K562 (cell line): ENCODE measurements at regions of chr1 and their contacts with region 1.

Region 1: GRCh38 chr1:112298558-112298957 is 97.5 kb upstream of the CTTNBP2NL start:
- DNase-seq: peak; percentile 70 to 75 (median 73)
- ATAC-seq: peak; percentile 94
- H3K4me3 ChIP-seq: no peak overlapping the region
- H3K27ac ChIP-seq: no peak overlapping the region
- H3K4me1 ChIP-seq: no peaks in the 10 kb centered on the region
- H3K27me3 ChIP-seq: no peaks in the 10 kb centered on the region; a peak in 1 of 5 replicates
- CTCF ChIP-seq: peak; percentile 79 to 98 (median 85)
- EP300 ChIP-seq: no peak
- POLR2A ChIP-seq: no peak
- RAD21 ChIP-seq: peak; percentile 97 to 98

Region 2: DNA sequence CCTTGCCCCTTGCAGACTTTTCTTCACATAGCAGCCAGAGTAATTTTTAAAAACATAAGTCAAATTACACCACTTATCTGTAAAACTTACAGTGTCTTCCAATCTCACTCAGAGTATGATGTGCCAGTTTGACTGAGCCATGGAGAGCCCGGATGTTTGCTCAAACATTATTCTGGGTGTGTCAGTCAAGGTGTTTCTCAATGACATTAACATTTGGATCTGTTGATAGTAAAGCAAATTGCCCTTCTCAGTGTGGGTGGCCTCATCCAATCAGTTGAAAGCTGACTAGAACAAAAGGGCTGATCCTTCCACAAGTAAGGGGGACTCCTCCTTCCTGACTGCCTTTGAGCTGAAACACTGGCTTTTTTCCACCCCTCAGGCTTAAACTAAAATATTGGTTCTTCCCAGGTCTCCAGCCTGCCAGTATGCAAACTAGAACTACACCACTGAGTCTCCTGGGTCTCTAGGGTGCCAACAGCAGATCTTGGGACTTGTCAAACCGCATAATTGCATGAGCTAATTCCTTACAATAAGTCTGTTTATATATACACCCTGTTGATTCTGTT is 60.5 kb before region 1 on chr1:
- CTCF ChIA-PET with region 1: no interaction called
- POLR2A ChIA-PET with region 1: no interaction called
- in situ Hi-C with region 1: no loop called
- intact Hi-C with region 1: no loop called
- DNase-seq: no peak
- ATAC-seq: no peak
- H3K4me3 ChIP-seq: no peak overlapping the region
- H3K27ac ChIP-seq: no peak overlapping the region
- H3K4me1 ChIP-seq: no peaks in the 10 kb centered on the region
- H3K27me3 ChIP-seq: no peaks in the 10 kb centered on the region; a peak in 1 of 5 replicates
- CTCF ChIP-seq: no peak
- EP300 ChIP-seq: no peak
- POLR2A ChIP-seq: no peak
- RAD21 ChIP-seq: no peak

Region 3: GRCh38 chr1:112337028-112337531 is 38.5 kb after region 1 on chr1:
- CTCF ChIA-PET with region 1: interaction called, 7 read pairs
- POLR2A ChIA-PET with region 1: interaction called, 4 read pairs
- in situ Hi-C with region 1: no loop called
- intact Hi-C with region 1: loop called (anchors 2 kb)
- DNase-seq: peak; percentile 49 to 67 (median 56)
- ATAC-seq: peak; percentile 96
- H3K4me3 ChIP-seq: no peak overlapping the region
- H3K27ac ChIP-seq: no peak overlapping the region
- H3K4me1 ChIP-seq: no peaks in the 10 kb centered on the region
- H3K27me3 ChIP-seq: peaks cover 0 to 10% of the 10 kb centered on the region in 2 experiments; a peak in 1 of 5 replicates
- CTCF ChIP-seq: peak; percentile 79 to 90 (median 90)
- EP300 ChIP-seq: no peak; the same call in 1 of the 2 replicates
- POLR2A ChIP-seq: no peak
- RAD21 ChIP-seq: peak; percentile 97

Region 4: DNA sequence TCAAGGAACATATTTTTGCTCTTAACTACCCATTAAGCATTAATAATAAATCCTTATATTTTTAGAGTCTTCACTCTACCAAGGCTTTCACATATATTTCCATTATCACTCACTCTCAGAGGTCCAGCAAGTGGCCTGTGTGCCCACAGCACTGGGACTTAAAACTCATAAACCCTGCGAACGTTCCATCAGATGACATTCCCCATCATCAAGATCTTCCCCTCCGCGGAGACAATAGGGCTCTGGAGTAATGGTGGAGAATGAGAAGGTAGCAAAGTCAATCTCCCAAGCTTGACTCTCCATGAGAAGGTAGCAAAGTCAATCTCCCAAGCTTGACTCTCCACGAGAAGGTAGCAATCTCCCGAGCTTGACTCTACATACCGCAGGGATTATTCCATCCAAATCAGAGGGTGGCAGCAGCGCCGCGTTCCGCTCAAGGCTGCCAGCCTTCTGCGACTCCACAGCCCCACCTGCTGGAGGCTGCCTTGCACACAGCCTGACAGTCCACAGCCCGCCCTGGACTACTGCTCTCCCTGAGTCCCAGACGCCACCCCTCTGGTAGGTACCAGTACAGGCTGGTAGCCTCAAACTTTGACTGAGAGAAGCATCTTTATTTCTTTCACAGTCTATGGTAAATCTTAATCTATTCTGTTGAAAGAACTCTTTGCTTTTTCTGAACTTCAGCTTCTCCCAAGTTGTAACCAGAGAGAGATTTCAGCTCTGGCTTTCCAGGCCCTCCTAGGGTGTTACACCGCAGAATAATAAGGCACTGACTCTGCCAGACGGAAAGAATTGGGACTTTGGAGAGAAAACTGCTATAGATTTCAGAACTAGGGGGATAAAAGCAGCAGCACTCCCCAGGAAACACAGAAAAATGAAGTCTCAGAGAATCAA is 71.1 kb after region 1 on chr1:
- CTCF ChIA-PET with region 1: interaction called, 8 read pairs
- POLR2A ChIA-PET with region 1: interaction called, 3 read pairs
- in situ Hi-C with region 1: no loop called
- intact Hi-C with region 1: loop called (anchors 2 kb)
- DNase-seq: peak; percentile 85 to 91 (median 90)
- ATAC-seq: peak; percentile 100
- H3K4me3 ChIP-seq: no peak overlapping the region
- H3K27ac ChIP-seq: no peak overlapping the region
- H3K4me1 ChIP-seq: no peaks in the 10 kb centered on the region
- H3K27me3 ChIP-seq: peaks cover 10 to 13% of the 10 kb centered on the region in 2 experiments
- CTCF ChIP-seq: peak; percentile 99 to 100 (median 100)
- EP300 ChIP-seq: no peak
- POLR2A ChIP-seq: no peak
- RAD21 ChIP-seq: peak; percentile 94 to 99

Region 5: DNA sequence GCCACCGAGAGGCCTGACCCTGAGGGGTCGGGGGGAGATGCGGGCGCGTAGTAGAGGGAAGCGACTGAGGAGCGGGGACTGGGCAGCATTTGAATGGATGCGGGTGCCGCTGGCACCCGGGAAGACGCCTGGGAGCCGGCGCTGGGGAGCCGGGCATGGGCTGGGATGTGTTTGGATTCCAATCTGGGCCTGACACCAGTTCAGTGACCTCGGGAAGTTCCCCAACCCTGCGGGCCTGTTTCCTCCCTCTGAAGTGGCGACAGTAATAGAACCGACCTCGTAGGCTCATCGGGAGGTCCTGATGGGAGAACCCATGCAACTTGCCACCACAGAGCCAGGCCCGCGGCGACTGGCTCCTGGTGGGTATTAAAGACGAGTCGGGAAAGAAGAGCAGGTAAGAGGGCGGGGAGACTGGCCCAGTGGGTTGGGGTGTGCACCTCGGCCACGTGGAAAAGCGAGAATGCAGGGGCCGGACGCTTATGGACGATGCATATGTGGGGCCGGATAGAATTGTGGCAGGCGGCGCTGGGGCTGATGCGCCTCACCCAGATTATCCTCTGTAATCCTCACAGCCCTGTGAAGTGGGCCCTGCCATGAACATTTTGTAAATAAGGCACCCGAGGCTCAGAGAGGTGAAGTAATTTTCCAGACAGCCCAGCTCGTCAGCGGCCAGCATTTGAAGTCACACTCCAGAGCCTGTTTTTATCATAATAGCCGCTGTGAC is 551.6 kb after region 1 on chr1:
- CTCF ChIA-PET with region 1: no interaction called
- POLR2A ChIA-PET with region 1: no interaction called
- in situ Hi-C with region 1: no loop called
- intact Hi-C with region 1: no loop called
- DNase-seq: no peak
- ATAC-seq: no peak
- H3K4me3 ChIP-seq: no peak overlapping the region
- H3K27ac ChIP-seq: no peak overlapping the region
- H3K4me1 ChIP-seq: peaks cover 6 to 8% of the 10 kb centered on the region in 2 experiments; a peak in 2 of 5 replicates
- H3K27me3 ChIP-seq: no peaks in the 10 kb centered on the region
- CTCF ChIP-seq: no peak
- EP300 ChIP-seq: no peak
- POLR2A ChIP-seq: no peak
- RAD21 ChIP-seq: no peak

Region 6: GRCh38 chr1:113269168-113269963 is 970.8 kb after region 1 on chr1:
- CTCF ChIA-PET with region 1: no interaction called
- POLR2A ChIA-PET with region 1: no interaction called
- in situ Hi-C with region 1: no loop called
- intact Hi-C with region 1: no loop called
- DNase-seq: no peak
- ATAC-seq: peak; percentile 40; the same call in 2 of the 3 replicates
- H3K4me3 ChIP-seq: no peak overlapping the region
- H3K27ac ChIP-seq: no peak overlapping the region
- H3K4me1 ChIP-seq: no peaks in the 10 kb centered on the region; a peak in 1 of 5 replicates
- H3K27me3 ChIP-seq: peaks cover 0 to 4% of the 10 kb centered on the region in 2 experiments; a peak in 1 of 5 replicates
- CTCF ChIP-seq: no peak
- EP300 ChIP-seq: no peak
- POLR2A ChIP-seq: no peak
- RAD21 ChIP-seq: no peak